K562 (cell line): ENCODE measurements at regions of chr10 and their contacts with region 1.

Region 1: DNA sequence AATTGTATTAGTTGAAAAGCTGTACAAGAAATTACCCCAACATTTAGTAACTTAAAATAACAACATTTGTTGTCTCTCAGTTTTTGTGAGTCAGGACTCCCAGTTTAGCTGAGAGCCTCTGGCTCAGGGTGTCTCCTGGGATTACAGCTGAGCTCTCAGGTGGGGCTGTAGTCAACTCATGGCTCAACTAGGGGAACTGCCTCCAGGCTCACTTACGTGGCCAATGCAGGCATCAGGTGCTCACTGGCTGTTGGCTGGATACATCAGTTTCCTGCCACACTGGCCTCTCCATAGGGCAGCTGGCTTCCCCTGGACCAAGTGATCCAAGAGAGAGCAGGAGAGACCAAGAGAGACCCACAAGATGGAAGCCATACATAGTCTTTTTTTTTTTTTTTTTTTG is 17.5 kb downstream of the CCNY start:
- DNase-seq: no peak
- ATAC-seq: peak; percentile 34
- H3K4me3 ChIP-seq: no peak overlapping the region
- H3K27ac ChIP-seq: no peak overlapping the region
- H3K4me1 ChIP-seq: peaks cover 12 to 48% of the 10 kb centered on the region in 2 experiments; a peak in 4 of 5 replicates
- H3K27me3 ChIP-seq: no peaks in the 10 kb centered on the region
- CTCF ChIP-seq: no peak
- EP300 ChIP-seq: no peak
- POLR2A ChIP-seq: no peak
- RAD21 ChIP-seq: no peak

Region 2: GRCh38 chr10:35043796-35044344 is 309.9 kb before region 1 on chr10:
- CTCF ChIA-PET with region 1: no interaction called
- POLR2A ChIA-PET with region 1: no interaction called
- in situ Hi-C with region 1: no loop called
- intact Hi-C with region 1: no loop called
- DNase-seq: peak in 1 of 4 experiments; percentile 28
- ATAC-seq: no peak
- H3K4me3 ChIP-seq: no peak overlapping the region
- H3K27ac ChIP-seq: no peak overlapping the region
- H3K4me1 ChIP-seq: peaks cover 3 to 10% of the 10 kb centered on the region in 2 experiments; a peak in 3 of 5 replicates
- H3K27me3 ChIP-seq: no peaks in the 10 kb centered on the region
- CTCF ChIP-seq: no peak
- EP300 ChIP-seq: no peak
- POLR2A ChIP-seq: no peak
- RAD21 ChIP-seq: no peak

Region 3: GRCh38 chr10:35208536-35208935 is 145.3 kb before region 1 on chr10:
- CTCF ChIA-PET with region 1: no interaction called
- POLR2A ChIA-PET with region 1: no interaction called
- in situ Hi-C with region 1: no loop called
- intact Hi-C with region 1: no loop called
- DNase-seq: no peak
- ATAC-seq: peak; percentile 54
- H3K4me3 ChIP-seq: no peak overlapping the region
- H3K27ac ChIP-seq: no peak overlapping the region
- H3K4me1 ChIP-seq: peaks cover 5 to 6% of the 10 kb centered on the region in 2 experiments; a peak in 3 of 5 replicates
- H3K27me3 ChIP-seq: no peaks in the 10 kb centered on the region
- CTCF ChIP-seq: no peak
- EP300 ChIP-seq: no peak
- POLR2A ChIP-seq: no peak
- RAD21 ChIP-seq: no peak

Region 4: DNA sequence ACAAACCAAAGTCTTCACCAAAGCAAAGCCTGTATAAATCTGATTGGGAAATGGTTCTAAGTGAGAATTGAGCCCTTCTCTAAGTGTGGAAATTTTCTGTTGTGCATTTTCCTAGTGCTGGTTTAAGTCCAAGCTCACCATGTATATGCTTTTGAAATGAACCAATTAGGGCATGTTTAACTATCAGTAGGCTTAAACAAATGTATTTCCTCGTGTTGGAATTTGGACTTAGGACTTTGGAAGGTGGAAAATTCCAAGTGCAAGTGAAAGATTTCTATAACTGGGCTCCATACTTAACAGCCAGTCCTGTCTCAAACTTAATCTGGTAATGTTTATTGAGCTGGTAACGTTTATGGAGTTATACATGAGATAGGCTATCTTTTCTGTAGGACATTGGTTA is 11.0 kb after region 1 on chr10:
- CTCF ChIA-PET with region 1: no interaction called
- POLR2A ChIA-PET with region 1: interaction called, 35 read pairs
- in situ Hi-C with region 1: no loop called
- intact Hi-C with region 1: no loop called
- DNase-seq: no peak
- ATAC-seq: no peak
- H3K4me3 ChIP-seq: no peak overlapping the region
- H3K27ac ChIP-seq: no peak overlapping the region
- H3K4me1 ChIP-seq: peaks cover 20 to 28% of the 10 kb centered on the region in 2 experiments
- H3K27me3 ChIP-seq: no peaks in the 10 kb centered on the region
- CTCF ChIP-seq: no peak
- EP300 ChIP-seq: no peak
- POLR2A ChIP-seq: no peak
- RAD21 ChIP-seq: no peak

Region 5: DNA sequence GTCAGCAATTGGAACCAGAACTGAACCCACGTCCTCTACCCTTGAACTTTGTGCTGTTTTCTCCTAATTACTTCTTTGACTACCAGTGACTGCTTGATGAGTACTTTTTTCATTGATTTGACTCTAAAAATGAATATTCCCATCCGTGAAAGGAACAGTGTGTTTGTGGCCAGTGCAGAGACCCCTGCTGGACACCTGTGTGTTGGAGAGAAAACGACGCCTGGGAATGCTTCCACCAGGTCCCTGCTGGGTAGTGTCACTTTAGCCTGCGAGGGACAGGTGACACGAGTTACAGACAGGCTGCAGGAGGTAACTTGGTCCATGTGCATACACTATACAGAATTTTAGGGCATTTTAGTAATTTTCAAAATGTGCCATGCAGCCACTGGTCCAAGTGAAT is 244.6 kb after region 1 on chr10:
- CTCF ChIA-PET with region 1: no interaction called
- POLR2A ChIA-PET with region 1: no interaction called
- in situ Hi-C with region 1: no loop called
- intact Hi-C with region 1: no loop called
- DNase-seq: peak in 2 of 4 experiments; percentile 27 to 32
- ATAC-seq: peak; percentile 84
- H3K4me3 ChIP-seq: no peak overlapping the region
- H3K27ac ChIP-seq: no peak overlapping the region
- H3K4me1 ChIP-seq: no peaks in the 10 kb centered on the region
- H3K27me3 ChIP-seq: peaks cover 13 to 36% of the 10 kb centered on the region in 2 experiments
- CTCF ChIP-seq: peak; percentile 49 to 64 (median 58)
- EP300 ChIP-seq: no peak
- POLR2A ChIP-seq: no peak
- RAD21 ChIP-seq: peak in 1 of 2 experiments; percentile 53; a peak in 3 of 4 replicates